Right cardiac atrium (tissue), 5 donors: ENCODE measurements at regions of chr22 and their contacts with region 1.

Region 1: DNA sequence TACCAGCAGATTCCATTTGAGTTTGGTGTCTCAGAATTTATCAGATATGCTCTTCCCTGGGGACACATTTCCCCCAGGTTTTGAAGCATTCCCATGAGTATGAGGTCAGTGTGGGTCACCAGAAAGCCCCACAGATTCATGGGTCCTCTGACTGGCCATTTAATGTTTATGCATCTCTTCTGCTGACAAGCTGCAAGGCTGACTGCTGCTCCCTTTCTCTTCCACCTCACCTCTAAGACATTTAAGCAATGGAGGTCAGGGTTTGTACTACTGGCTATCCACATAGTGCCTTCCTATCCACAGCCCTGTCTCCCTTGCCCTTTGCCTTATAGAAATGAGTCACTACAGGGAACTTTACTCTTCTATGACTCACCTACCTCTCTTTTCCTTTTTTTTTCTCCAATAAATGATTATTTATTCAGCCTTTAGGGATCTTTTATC is 106.0 kb upstream of the TIMP3 start:
- DNase-seq: no peak
- ATAC-seq: no peak
- H3K4me3 ChIP-seq: no peak overlapping the region
- H3K27ac ChIP-seq: no peak overlapping the region
- H3K4me1 ChIP-seq: no peaks in the 10 kb centered on the region
- H3K27me3 ChIP-seq: no peaks in the 10 kb centered on the region

Region 2: GRCh38 chr22:31650391-31650790 is 1045.1 kb before region 1 on chr22:
- intact Hi-C with region 1: no loop called
- DNase-seq: no peak
- ATAC-seq: peak in 1 of 2 donors; percentile 34
- H3K4me3 ChIP-seq: no peak overlapping the region
- H3K27ac ChIP-seq: no peak overlapping the region
- H3K4me1 ChIP-seq: no peaks in the 10 kb centered on the region
- H3K27me3 ChIP-seq: no peaks in the 10 kb centered on the region

Region 3: DNA sequence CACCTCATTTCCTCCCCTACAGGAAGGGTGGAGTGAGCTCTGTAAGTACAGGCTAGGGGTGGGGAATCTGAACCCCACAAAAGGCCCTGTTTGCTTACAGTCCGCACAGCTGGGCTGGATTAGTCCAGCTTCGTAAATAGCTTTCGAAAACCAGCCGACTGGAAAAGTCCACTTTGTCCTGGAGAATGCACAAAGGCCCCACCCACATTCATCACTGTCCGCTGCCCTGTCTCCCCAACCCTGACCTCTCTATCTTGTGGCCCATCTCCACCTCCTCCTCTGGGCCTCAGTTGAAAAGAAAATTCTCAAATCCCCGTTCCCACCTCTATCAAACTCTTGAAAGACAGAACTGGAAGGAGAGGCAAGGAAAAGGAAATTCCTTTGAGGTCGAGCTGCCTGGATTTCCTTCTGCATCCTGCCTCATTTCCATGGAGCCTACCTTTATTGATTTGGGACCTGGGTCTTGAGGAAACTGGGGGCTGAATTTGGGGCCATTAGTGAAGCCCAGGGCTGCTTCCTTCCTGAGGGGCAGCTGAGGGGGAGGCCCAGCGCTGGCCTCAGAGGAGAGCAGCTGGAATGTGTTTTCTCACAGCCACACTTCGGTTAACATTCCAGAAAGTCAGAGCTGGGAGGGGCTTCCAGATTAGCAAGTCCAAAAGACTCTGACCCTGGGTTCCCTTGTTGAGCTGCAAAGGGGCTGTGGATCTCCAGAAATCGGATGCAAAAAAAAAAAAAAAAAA is 73.3 kb before region 1 on chr22:
- intact Hi-C with region 1: loop called in 1 of 4 experiments (anchors 5 kb)
- DNase-seq: peak; percentile 66 to 83 (median 83)
- ATAC-seq: peak; percentile 64 to 77
- H3K4me3 ChIP-seq: no peak overlapping the region
- H3K27ac ChIP-seq: peak overlapping the region; percentile 97
- H3K4me1 ChIP-seq: peaks cover 55% of the 10 kb centered on the region
- H3K27me3 ChIP-seq: no peaks in the 10 kb centered on the region

Region 4: GRCh38 chr22:32723643-32724042 is 28.2 kb after region 1 on chr22:
- intact Hi-C with region 1: no loop called
- DNase-seq: peak; percentile 73 to 92 (median 90)
- ATAC-seq: peak; percentile 85 to 89
- H3K4me3 ChIP-seq: no peak overlapping the region
- H3K27ac ChIP-seq: no peak overlapping the region
- H3K4me1 ChIP-seq: peaks cover 5% of the 10 kb centered on the region
- H3K27me3 ChIP-seq: no peaks in the 10 kb centered on the region

Region 5: DNA sequence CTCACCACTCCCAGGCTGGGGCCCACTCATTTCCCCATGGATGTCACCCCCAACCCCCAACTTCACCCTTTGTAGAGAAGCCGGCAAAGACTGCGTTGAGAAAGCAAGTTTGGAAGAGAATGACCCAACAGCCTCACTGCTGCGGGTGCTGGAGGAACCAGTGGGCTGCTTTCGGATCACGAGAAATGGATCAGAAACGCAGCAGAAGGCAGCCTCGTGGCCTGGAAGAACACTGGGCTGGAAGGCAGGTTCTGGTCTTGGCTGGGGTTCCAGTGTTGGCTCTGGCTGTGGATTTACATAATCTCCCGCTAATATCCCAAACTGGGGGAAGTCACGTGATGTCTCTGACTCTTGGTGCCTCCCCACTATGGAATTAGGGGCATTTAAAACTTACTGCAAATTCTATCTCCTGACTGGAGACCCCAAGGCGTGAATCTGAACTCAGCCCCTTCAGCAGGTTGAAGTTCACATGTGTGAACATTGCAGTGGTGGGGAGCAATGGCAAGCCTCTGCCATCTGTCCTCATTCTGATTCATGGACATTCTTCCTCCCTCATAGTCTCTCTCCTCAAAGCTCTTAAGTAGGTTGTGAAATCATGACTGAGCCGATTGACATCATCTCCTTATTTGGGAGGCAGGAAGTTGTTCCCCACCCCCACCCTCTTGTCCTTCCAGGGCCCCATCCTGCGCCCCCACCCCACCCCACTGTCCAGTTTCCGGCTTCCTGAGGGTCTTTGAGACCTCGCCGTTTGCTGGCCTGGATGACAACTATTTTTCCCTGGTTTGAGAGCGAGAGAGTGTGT is 69.1 kb after region 1 on chr22:
- intact Hi-C with region 1: loop called in 1 of 4 experiments (anchors 10 kb)
- DNase-seq: peak; percentile 76 to 90 (median 85)
- ATAC-seq: peak; percentile 73 to 78
- H3K4me3 ChIP-seq: no peak overlapping the region
- H3K27ac ChIP-seq: peak overlapping the region; percentile 83
- H3K4me1 ChIP-seq: peaks cover 25% of the 10 kb centered on the region
- H3K27me3 ChIP-seq: no peaks in the 10 kb centered on the region

Region 6: GRCh38 chr22:32775957-32776356 is 80.5 kb after region 1 on chr22:
- intact Hi-C with region 1: loop called in 1 of 4 experiments (anchors 10 kb)
- DNase-seq: no peak
- ATAC-seq: no peak
- H3K4me3 ChIP-seq: no peak overlapping the region
- H3K27ac ChIP-seq: no peak overlapping the region
- H3K4me1 ChIP-seq: no peaks in the 10 kb centered on the region
- H3K27me3 ChIP-seq: no peaks in the 10 kb centered on the region

Region 7: GRCh38 chr22:32880893-32881596 is 185.6 kb after region 1 on chr22:
- intact Hi-C with region 1: no loop called
- DNase-seq: peak; percentile 91 to 97 (median 96)
- ATAC-seq: peak; percentile 96 to 97
- H3K4me3 ChIP-seq: no peak overlapping the region
- H3K27ac ChIP-seq: peak overlapping the region; percentile 89
- H3K4me1 ChIP-seq: peaks cover 7% of the 10 kb centered on the region
- H3K27me3 ChIP-seq: no peaks in the 10 kb centered on the region